Gastrocnemius medialis (tissue), 4 donors: ENCODE measurements at regions of chr19 and their contacts with region 1.

Region 1: GRCh38 chr19:43934985-43935708 is at the start of gene ZNF45:
- DNase-seq: peak; percentile 80 to 83
- ATAC-seq: peak; percentile 98 to 99
- H3K4me3 ChIP-seq: peak within 1 kb of the TSS; percentile 52 to 78 (median 68)
- H3K27ac ChIP-seq: peak within 1 kb of the TSS; percentile 71 to 87 (median 77)
- H3K4me1 ChIP-seq: peaks cover 14 to 17% of the 10 kb centered on the region in 2 donors
- H3K27me3 ChIP-seq: no peaks in the 10 kb centered on the region
- CTCF ChIP-seq: no peak
- POLR2A ChIP-seq: no peak
- total RNA-seq, gene ZNF45: 2.8 to 7.7 (median 4.0) TPM

Region 2: DNA sequence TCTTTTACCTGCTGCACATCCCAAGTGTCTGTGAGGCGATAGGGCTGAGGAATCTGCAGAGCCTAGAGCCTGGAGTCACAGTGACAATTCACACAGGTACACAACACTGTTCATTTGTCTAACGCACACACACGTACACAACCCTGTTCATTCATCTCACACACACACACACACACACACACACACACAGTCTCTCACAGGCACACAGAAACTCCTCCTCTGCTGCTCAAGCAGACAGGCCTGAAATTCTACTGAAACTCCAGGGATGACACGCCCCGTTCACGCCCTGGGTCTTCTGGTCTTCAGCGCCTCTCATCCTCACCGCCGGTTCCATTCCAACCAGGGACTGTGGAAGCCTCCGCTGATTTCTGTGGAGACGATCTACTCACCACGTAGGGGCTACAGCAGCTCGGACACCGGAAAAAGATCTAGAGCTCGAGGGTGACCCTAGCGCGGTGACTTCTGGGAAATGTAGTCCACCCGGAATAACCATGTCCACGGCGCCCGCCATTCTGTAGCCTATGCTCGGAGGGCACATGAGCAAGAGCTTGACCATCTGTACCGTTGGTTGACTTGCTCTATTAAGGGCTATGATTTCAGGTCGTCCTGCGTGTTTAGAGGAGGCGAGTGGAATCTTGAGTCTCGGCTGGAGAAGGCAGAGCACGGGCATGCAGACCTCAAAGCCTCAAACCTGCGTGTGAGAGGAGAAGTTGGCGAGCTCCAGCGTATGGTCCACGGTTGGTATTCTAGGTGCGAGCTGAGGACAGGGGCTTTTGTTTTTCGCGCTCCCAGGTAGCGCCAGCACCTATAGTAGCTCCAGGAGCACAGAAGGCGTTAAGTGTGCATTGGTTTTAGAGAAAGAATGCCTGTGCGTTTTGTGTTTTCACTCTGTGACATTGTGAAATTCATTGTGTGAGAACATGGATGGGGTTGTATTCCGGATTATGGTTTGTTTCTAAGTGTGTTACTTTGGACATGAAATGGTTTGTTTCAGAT is 33.5 kb before region 1 on chr19:
- in situ Hi-C with region 1: no loop called
- intact Hi-C with region 1: loop called (anchors 1 kb)
- DNase-seq: peak; percentile 48 to 74
- ATAC-seq: peak; percentile 86 to 99
- H3K4me3 ChIP-seq: peak overlapping the region; percentile 56 to 95 (median 58)
- H3K27ac ChIP-seq: peak overlapping the region in 3 of 4 donors; percentile 28 to 66 (median 31)
- H3K4me1 ChIP-seq: peaks cover 0 to 3% of the 10 kb centered on the region in 2 donors
- H3K27me3 ChIP-seq: no peaks in the 10 kb centered on the region
- CTCF ChIP-seq: no peak
- POLR2A ChIP-seq: no peak

Region 3: GRCh38 chr19:43983912-43984686 is 49.0 kb after region 1 on chr19 and contains the start of gene ZNF155:
- in situ Hi-C with region 1: no loop called
- intact Hi-C with region 1: loop called (anchors 1 kb)
- DNase-seq: peak; percentile 90 to 94
- ATAC-seq: peak; percentile 100
- H3K4me3 ChIP-seq: peak within 1 kb of the TSS; percentile 63 to 85 (median 76)
- H3K27ac ChIP-seq: peak within 1 kb of the TSS; percentile 77 to 83 (median 80)
- H3K4me1 ChIP-seq: peaks cover 0 to 5% of the 10 kb centered on the region in 2 donors
- H3K27me3 ChIP-seq: no peaks in the 10 kb centered on the region
- CTCF ChIP-seq: no peak
- POLR2A ChIP-seq: no peak
- total RNA-seq, gene ZNF155: 0.97 to 2.0 (median 1.6) TPM

Region 4: GRCh38 chr19:44093931-44094765 is 159.0 kb after region 1 on chr19 and contains the start of gene ZNF224:
- in situ Hi-C with region 1: no loop called
- intact Hi-C with region 1: loop called (anchors 1 kb)
- DNase-seq: peak; percentile 85 to 87
- ATAC-seq: peak; percentile 100
- H3K4me3 ChIP-seq: peak within 1 kb of the TSS; percentile 76 to 91 (median 80)
- H3K27ac ChIP-seq: peak within 1 kb of the TSS; percentile 70 to 82 (median 73)
- H3K4me1 ChIP-seq: peaks cover 7 to 10% of the 10 kb centered on the region in 2 donors
- H3K27me3 ChIP-seq: no peaks in the 10 kb centered on the region
- CTCF ChIP-seq: no peak
- POLR2A ChIP-seq: peak in 1 of 2 donors; percentile 41
- total RNA-seq, gene ZNF224: 4.9 to 14.1 (median 6.9) TPM

Region 5: DNA sequence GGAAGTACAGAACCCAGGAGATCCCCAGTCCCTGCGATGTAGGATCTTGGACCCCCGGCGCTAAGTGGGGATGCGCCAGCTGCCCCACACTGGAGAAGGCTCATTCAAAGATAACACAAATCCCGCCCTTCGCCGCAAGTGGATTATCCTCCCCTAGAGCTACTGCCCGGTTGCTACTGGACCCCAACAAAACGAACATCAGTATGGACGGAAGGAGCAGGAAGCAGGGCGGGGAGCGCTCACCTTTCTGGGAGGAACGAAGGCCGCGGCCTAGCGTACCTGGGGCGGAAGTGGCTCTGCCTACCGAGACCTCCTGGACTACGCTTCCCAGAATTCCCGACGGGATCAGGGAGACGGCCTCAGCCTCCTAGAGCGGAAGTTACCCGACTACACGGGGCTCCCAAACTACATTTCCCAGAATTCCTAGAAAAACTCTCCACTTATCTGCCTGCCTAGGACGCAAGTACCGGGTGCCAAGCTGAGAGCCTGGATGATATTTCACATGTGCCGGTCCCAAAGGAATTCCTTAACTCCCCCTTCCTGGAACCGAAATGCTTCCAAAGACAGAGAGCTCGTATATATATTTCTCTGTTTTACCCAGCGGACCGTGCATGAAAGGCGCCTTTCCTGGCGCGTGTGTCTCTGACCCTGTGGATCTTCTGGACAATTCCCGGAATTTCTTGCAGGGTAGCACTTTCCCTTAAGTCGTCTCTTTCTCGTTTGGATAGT is 421.4 kb after region 1 on chr19 and contains the start of gene ZNF112:
- in situ Hi-C with region 1: no loop called
- intact Hi-C with region 1: loop called (anchors 10 kb)
- DNase-seq: peak; percentile 85 to 88
- ATAC-seq: peak; percentile 100
- H3K4me3 ChIP-seq: peak within 1 kb of the TSS; percentile 51 to 74 (median 65)
- H3K27ac ChIP-seq: peak within 1 kb of the TSS; percentile 46 to 68 (median 58)
- H3K4me1 ChIP-seq: peaks cover 8 to 9% of the 10 kb centered on the region in 2 donors
- H3K27me3 ChIP-seq: no peaks in the 10 kb centered on the region
- CTCF ChIP-seq: no peak
- POLR2A ChIP-seq: no peak
- total RNA-seq, gene ZNF112: 0.78 to 4.0 (median 1.6) TPM